ENCODE measurements at regions of chr16 and their contacts with region 1.

Region 1: DNA sequence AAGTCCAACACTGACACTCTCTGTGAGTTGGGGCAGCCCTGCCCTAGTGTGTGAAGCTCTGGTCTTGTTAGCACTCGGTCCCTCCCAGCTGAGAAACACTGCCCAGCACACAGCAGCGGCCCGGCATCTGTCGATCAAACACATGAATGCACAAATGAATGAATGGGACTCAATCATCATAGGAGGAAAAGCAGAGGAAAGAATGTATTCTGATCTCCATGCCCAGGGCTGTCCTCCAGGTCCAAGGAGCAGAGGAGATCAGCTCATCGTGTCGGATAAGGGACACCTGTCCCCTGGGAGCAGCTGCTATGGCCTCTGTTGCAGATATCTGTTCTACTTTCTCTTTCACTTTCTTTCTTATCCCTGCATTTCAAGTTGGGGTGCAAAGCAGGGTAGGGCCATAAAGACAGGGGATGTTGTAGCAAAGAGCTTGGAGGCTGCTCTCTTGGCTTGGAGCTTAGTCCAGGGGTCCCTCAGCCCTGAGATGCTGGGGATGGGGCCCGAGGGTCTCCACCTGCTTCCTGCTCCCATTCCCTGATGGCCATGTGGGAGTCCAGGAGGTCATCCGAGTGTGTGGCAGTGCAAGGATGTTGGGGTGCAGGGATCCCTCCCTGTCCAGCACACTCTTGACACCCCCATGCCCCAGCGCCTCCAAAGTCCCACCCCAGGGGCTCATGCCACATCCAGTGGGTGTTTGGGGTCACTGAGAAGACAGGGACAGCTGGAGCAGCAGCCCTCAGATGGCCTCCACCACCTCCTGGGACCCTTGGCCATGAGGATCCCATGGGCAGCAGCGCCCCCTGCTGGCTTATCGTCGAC is 88.2 kb downstream of the IRF8 start:
- DNase-seq: peak in 1 of 4 donors; percentile 17
- ATAC-seq: no peak
- H3K4me3 ChIP-seq: no peak overlapping the region
- H3K27ac ChIP-seq: no peak overlapping the region
- H3K4me1 ChIP-seq: no peaks in the 10 kb centered on the region
- H3K27me3 ChIP-seq: no peaks in the 10 kb centered on the region
- CTCF ChIP-seq: peak in 6 of 7 experiments; percentile 18 to 43 (median 29)
- POLR2A ChIP-seq: no peak

Region 2: DNA sequence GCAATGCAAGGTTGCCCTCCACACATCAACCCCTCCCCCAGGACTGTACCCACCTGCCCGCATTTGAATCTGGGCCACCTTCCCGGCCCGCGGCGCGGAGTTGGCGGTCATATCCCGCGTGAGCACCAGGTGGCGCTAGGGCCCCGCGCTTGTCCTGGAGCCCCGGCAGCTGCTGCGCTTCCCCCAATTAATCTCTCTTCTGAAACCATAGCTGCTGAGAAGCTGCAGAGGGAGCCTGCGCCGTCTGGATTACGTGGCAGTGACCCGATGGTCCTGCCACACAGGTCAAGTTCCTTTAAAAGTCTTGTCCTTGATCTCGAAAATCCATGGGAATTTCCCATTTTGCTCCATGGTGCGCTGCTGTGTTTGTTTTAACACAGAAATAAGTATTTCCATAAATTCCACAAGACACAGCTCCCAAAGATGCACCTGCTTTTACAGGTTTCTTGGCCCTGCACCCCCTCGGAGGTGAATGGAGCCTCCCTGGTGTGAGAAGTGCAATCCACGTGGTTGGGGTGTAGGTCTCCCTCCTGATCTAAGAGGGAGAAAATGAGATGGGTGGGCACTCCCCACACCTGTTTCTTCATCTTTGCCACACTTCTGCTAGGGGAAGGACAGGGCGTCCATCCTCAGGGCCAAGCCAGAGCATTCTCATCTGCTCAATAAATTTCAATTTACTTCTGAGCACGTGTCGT is 165.6 kb before region 1 on chr16:
- intact Hi-C with region 1: loop called (anchors 10 kb)
- DNase-seq: peak; percentile 80 to 86 (median 84)
- ATAC-seq: peak; percentile 86
- H3K4me3 ChIP-seq: no peak overlapping the region
- H3K27ac ChIP-seq: no peak overlapping the region
- H3K4me1 ChIP-seq: peaks cover 7% of the 10 kb centered on the region
- H3K27me3 ChIP-seq: peaks cover 0 to 6% of the 10 kb centered on the region in 2 donors
- CTCF ChIP-seq: peak; percentile 93 to 98 (median 97)
- POLR2A ChIP-seq: no peak

Region 3: GRCh38 chr16:85947230-85948137 is 39.7 kb before region 1 on chr16:
- intact Hi-C with region 1: no loop called
- DNase-seq: no peak
- ATAC-seq: no peak
- H3K4me3 ChIP-seq: no peak overlapping the region
- H3K27ac ChIP-seq: no peak overlapping the region
- H3K4me1 ChIP-seq: no peaks in the 10 kb centered on the region
- H3K27me3 ChIP-seq: no peaks in the 10 kb centered on the region
- CTCF ChIP-seq: no peak
- POLR2A ChIP-seq: no peak

Region 4: DNA sequence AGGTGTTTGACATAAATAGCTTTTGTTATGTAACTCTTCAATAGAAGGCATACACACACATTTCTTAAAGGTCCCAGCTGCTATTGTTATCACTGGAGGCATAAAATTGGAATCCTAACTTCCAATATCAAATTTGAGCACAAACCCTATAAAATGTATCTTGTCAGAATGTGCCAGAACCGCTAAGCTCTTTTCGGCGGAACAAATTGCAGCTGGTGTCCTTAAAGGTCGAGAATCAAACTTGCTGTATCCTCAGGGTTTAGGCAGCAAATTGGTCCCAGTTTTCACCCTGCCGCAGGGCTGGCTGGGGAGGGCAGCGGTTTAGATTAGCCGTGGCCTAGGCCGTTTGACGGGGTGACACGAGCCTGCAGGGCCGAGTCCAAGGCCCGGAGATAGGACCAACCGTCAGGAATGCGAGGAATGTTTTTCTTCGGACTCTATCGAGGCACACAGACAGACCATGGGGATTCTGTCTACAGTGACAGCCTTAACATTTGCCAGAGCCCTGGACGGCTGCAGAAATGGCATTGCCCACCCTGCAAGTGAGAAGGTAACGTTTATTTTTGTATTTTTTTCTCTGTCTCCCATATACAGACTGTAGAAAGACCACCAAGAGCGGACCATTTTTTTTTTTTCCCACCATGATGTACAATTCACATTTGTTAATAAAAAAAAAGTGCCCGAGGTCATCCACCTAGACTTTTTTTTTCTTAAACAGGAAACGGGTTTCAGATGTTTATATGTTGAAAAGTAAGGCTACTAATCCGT is 208.9 kb after region 1 on chr16:
- intact Hi-C with region 1: no loop called
- DNase-seq: no peak
- ATAC-seq: no peak
- H3K4me3 ChIP-seq: no peak overlapping the region
- H3K27ac ChIP-seq: no peak overlapping the region
- H3K4me1 ChIP-seq: no peaks in the 10 kb centered on the region
- H3K27me3 ChIP-seq: no peaks in the 10 kb centered on the region
- CTCF ChIP-seq: no peak
- POLR2A ChIP-seq: no peak